ENCODE measurements at regions of chr10 and their contacts with region 1.

Region 1: DNA sequence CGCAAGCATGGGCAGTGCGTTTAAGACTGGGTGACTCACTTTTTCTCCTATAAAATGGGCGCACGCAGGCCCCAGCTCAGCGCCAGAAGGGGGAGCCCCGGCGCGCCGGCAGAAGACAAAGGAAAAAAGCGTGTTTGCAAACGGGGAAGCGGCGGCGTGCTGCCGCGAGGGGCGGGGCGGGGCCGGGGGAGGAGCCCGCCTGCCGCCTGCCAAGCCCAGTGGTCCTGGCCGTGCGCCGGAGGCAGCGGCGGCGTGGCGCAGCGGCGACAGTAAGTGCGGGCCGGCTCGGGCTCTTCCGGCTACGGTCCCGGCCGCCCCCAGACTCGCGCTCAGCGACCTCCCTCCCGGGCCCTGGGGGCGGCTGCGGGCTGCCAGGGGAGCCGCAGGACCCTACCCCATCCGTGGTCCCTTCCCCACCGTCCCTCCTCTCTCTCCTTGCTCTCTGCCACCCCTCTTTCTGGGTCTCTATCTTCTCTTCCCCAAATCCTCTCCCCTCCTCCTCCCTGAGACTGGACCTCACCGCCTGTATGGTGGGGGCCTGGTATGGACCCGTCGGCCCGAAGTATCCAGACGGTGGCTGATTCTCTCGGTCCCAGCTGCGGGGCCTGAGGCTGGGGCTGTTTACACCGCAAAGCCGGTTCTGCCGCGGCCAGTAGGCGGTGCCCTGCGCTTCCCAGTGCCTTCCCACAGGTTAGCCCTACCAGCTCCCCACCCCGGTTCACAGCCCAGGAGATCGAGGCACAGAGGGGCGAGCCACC is at the start of gene SLC29A3:
- H3K4me3 ChIP-seq: peak within 1 kb of the TSS; percentile 70
- H3K27ac ChIP-seq: no peak within 1 kb of the TSS; the same call in 1 of the 2 replicates
- H3K4me1 ChIP-seq: no peaks in the 10 kb centered on the region
- CTCF ChIP-seq: peak; percentile 97

Region 2: GRCh38 chr10:71255808-71256660 is 63.2 kb before region 1 on chr10:
- CTCF ChIA-PET with region 1: no interaction called
- POLR2A ChIA-PET with region 1: no interaction called
- H3K4me3 ChIP-seq: no peak overlapping the region
- H3K27ac ChIP-seq: no peak overlapping the region
- H3K4me1 ChIP-seq: peaks cover 6% of the 10 kb centered on the region
- CTCF ChIP-seq: no peak

Region 3: DNA sequence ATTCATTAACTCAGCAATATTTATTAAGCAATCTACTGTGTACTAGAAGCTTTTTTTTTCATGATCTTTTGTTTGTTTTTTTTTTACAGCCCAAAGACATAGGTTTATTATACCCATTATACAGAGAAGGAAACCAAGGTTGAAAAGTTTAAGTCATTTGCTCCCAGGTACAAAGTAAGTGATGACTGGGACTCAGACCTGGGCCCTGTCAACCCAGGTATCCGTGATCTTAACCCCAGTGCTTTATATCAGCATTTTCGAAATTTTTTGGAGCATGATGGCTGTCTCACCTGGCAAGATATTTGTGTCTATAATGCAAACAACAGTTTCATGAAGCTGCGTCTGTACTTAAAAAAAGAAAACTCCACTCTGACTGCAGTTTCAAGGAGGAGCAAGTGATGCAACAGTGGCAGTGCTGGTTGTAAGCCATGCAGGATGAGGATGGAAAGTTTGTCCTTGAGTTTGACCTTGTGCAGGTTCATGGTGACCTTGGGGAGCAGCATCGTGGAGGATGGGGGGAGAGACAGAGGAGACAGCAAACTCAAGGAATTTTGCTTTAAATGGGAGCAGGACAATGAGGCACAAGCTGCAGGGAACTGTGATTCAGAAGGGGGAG is 11.7 kb after region 1 on chr10:
- CTCF ChIA-PET with region 1: interaction called, 15 read pairs
- POLR2A ChIA-PET with region 1: no interaction called
- H3K4me3 ChIP-seq: no peak overlapping the region
- H3K27ac ChIP-seq: no peak overlapping the region
- H3K4me1 ChIP-seq: no peaks in the 10 kb centered on the region
- CTCF ChIP-seq: no peak

Region 4: GRCh38 chr10:71371750-71372166 is 52.5 kb after region 1 on chr10:
- CTCF ChIA-PET with region 1: interaction called, 10 read pairs
- POLR2A ChIA-PET with region 1: interaction called, 10 read pairs
- H3K4me3 ChIP-seq: no peak overlapping the region
- H3K27ac ChIP-seq: no peak overlapping the region
- H3K4me1 ChIP-seq: no peaks in the 10 kb centered on the region
- CTCF ChIP-seq: no peak

Region 5: DNA sequence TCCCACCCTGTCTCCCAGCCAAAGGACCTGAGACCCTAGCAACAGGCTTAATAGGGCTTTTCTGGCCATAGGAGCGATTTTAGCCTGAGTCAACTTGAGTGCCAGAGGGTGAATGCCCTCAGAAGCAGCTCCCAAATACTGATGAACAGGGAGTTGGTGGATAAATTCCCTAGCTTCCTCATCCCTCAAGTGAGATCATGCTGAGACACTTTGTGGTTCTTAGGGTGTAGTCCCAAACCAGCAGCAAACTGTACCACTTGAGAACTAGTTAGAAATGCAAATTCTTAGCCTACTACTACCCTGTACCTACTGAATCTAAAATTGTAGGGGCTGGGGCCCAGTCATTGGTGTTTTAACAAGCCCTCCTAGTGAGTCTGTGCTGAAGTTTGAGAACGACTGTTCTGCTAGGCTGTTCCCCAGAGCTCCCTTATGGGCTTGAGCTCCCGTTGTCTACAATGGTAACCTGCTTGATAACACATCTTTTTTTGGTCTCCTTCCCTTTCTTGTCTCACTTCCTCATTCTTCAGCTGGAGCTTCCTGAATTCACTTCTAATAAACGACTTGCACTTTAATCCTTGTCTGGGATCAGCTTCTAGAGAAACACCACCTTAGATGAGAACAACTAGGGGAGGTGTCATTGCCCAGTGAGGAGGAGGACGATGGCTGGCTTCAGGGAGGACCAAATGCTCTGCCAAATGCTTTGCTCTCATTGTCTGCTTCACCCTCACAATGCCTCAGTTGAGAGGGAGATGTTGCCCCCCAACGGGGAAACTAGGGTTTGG is 59.3 kb after region 1 on chr10:
- CTCF ChIA-PET with region 1: interaction called, 25 read pairs
- POLR2A ChIA-PET with region 1: interaction called, 10 read pairs
- H3K4me3 ChIP-seq: no peak overlapping the region
- H3K27ac ChIP-seq: no peak overlapping the region
- H3K4me1 ChIP-seq: 0 out of 2 replicates have a peak, but pooled peaks cover 2% of the 10 kb centered on the region
- CTCF ChIP-seq: no peak

Region 6: DNA sequence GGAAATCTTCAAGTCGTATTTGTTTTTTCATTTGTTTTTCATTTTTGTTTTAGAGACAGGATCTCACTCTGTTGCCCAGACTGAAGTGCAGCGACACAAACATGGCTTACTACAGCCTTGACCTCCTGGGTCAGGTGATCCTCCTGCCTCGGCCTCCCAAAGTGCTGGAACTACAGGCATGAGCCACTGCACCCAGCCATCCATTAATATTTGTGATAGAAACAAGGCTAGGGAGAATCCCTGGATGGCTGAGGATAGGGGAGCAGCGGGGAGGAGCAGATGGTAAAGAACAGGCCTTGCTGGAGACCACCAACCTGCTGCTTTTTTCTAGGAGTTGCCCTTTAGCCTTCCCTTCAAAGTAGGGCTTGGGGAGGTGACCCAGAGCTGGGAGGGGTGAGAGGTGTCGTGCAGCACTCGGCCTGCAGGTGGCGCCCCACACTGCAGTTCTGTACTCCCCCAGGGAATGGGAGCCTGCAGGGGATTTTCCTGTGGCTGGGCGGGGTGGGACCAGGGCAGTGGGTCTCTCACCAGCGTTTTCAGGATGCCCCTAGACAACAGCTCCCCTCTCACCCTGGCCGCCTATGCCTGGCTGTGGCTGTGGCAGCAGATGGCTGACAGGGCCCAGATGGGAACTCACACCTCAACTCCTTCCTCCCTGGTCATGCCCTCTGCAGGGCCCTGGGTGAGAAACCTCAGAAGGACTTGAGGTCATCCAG is 64.9 kb after region 1 on chr10:
- CTCF ChIA-PET with region 1: interaction called, 25 read pairs
- POLR2A ChIA-PET with region 1: interaction called, 3 read pairs
- H3K4me3 ChIP-seq: no peak overlapping the region
- H3K27ac ChIP-seq: no peak overlapping the region
- H3K4me1 ChIP-seq: no peaks in the 10 kb centered on the region
- CTCF ChIP-seq: peak; percentile 83

Region 7: DNA sequence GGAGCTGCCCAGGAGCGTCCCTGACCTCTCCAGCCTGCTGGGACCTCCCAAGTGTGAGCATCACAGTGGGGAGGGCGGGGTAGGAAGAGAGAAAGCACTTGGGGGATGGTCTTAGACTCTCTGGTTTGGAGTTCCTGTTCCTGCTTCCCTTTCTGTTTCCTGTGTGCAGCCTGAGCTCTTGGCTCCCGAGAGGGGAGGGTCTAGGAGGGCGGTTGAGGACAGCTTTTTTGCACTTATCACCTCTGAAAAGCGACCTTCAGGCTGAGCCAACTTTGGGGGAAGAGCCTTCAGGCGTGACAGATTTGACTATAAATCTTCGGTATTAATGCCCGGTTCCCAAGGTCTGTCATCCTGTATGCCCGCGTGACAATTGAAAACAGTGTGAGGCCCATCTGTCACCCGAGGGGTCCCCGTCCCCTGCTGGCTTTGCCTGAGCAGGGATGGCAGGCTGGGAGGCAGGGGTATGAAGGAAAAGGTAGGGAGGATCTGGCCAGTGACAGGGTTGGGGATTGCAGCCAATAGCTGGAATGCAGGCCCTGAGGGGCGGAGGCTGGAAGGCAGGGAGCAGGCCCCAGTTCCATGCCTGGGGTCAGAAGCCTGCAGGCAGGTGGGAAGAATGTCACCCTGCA is 156.1 kb after region 1 on chr10:
- CTCF ChIA-PET with region 1: no interaction called
- POLR2A ChIA-PET with region 1: no interaction called
- H3K4me3 ChIP-seq: no peak overlapping the region
- H3K27ac ChIP-seq: no peak overlapping the region
- H3K4me1 ChIP-seq: no peaks in the 10 kb centered on the region
- CTCF ChIP-seq: no peak

Region 8: GRCh38 chr10:71708301-71708703 is 389.1 kb after region 1 on chr10:
- CTCF ChIA-PET with region 1: interaction called, 108 read pairs
- POLR2A ChIA-PET with region 1: interaction called, 4 read pairs
- H3K4me3 ChIP-seq: no peak overlapping the region
- H3K27ac ChIP-seq: no peak overlapping the region
- H3K4me1 ChIP-seq: no peaks in the 10 kb centered on the region
- CTCF ChIP-seq: peak; percentile 78

Measured in HEK293 (cell line).